ENCODE measurements at regions of chr17 and their contacts with region 1.

Region 1: GRCh38 chr17:69567130-69567529 is 152.6 kb downstream of the MAP2K6 start:
- DNase-seq: no peak
- H3K4me3 Mint-ChIP-seq: no peak overlapping the region
- H3K27ac Mint-ChIP-seq: no peak overlapping the region
- H3K4me1 Mint-ChIP-seq: peaks cover 11% of the 10 kb centered on the region
- H3K27me3 Mint-ChIP-seq: peaks cover 2% of the 10 kb centered on the region

Region 2: GRCh38 chr17:69404382-69404781 is 162.7 kb before region 1 on chr17:
- intact Hi-C with region 1: no loop called
- DNase-seq: no peak
- H3K4me3 Mint-ChIP-seq: no peak overlapping the region
- H3K27ac Mint-ChIP-seq: no peak overlapping the region
- H3K4me1 Mint-ChIP-seq: peaks cover 10% of the 10 kb centered on the region
- H3K27me3 Mint-ChIP-seq: peaks cover 9% of the 10 kb centered on the region

Region 3: DNA sequence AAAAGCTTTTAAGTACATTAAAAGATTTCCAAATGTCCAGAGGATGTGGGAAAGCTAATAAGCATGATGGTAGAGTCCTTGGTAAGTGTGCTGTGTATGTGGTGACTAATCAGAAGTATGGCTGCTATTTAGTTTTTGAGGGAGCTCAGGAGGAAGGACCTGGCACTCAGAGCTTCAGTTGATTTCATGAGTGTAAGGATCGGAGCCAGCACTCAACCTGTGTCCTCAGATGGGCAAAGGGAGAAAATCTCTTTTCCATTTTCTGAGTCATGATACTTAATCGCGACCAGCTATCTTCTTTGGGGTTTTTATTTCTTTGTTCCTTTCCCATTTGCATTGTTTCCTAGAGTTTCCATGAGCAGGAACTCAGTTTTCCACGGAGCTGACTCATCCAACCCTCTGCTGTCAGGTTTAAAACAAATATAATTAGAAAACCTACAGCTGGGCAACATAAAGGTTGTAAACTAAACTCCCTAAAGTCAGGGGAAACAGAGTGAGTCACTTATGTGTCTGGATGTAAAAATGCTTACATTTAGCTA is 27.3 kb before region 1 on chr17:
- intact Hi-C with region 1: no loop called
- DNase-seq: no peak
- H3K4me3 Mint-ChIP-seq: no peak overlapping the region
- H3K27ac Mint-ChIP-seq: no peak overlapping the region
- H3K4me1 Mint-ChIP-seq: peaks cover 9% of the 10 kb centered on the region
- H3K27me3 Mint-ChIP-seq: no peaks in the 10 kb centered on the region

Region 4: DNA sequence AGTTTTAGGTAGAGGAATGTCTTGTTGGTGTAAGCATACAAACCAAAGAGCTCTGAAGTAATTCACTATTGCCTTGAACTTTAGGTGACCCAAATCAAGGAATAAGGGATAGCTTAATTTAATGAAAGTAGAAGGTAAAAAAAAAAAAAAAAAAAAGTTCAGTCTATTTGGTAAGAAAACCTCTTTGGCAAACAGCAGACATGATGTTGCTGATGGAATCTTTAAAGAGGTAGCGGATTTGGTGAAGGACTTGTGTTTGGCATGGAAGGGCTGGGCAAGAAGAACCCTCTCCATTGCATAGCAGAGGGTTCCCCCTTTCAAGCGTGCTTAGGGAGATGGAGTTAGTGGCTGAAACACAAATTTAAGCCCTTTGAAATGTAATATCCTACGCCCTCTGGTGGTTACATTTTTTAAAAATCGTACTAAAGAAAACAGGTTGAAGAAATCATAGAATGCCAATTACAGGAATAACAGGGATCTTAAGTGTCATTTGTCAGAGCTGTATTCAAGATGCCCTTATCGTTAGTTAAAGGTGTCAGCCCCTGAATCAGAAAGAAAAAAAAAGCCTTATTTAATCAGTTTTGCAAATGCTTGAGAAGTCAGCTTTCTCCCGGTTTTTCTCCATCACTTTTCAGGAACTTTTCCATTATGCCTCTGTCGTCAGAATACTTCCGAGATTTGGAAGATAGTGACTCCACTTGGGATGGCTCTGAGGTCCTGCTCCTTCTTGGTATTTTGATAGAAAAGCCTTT is 985.3 kb after region 1 on chr17:
- intact Hi-C with region 1: loop called (anchors 10 kb)
- DNase-seq: no peak
- H3K4me3 Mint-ChIP-seq: no peak overlapping the region
- H3K27ac Mint-ChIP-seq: no peak overlapping the region
- H3K4me1 Mint-ChIP-seq: no peaks in the 10 kb centered on the region
- H3K27me3 Mint-ChIP-seq: no peaks in the 10 kb centered on the region

Measured in activated T-helper 1 cell treated with anti-CD3 and anti-CD28 coated beads, Interleukin-12 subunit alpha, Interleukin-12 subunit beta, Interleukin-2, Interleukin-4 antibody, amounts not matched to agents 30 ng/mL and 10 ng/mL and 1 ng/mL, durations not matched to agents 14 hours and 24 hours and 36 hours (primary cell).